ENCODE measurements at regions of chr19 and their contacts with region 1.

Region 1: GRCh38 chr19:40633207-40633606 is 32.0 kb downstream of the LTBP4 start:
- DNase-seq: no peak
- ATAC-seq: no peak
- H3K4me3 ChIP-seq: no peak overlapping the region
- H3K4me3 Mint-ChIP-seq: no peak overlapping the region
- H3K27ac ChIP-seq: no peak overlapping the region
- H3K27ac Mint-ChIP-seq: peak overlapping the region in 2 of 9 donors; percentile 11 to 78
- H3K4me1 ChIP-seq: peaks cover 4 to 5% of the 10 kb centered on the region in 2 donors
- H3K4me1 Mint-ChIP-seq: peaks cover 7 to 19% (median 16%) of the 10 kb centered on the region in 7 donors
- H3K27me3 ChIP-seq: no peaks in the 10 kb centered on the region
- H3K27me3 Mint-ChIP-seq: peaks cover 0 to 20% (median 0%) of the 10 kb centered on the region in 5 donors

Region 2: DNA sequence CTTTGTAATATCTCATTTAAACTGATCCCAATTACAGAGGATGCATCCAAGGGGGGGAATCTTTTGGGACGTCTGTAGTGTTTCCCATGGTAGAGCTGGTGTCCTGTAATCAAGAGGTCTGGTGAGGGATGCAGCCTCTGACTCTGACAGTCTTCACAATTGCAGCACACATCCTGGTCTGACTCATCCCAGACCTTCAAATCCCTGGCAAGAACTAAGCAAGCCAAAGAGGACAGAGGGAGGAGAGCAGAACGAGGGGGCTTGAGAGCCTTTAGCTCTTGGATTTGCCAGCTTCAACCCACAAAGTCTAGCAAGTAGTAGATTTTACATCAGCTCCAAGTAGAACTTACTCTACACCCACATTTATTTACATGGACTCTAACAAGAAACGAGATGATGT is 681.5 kb before region 1 on chr19:
- CTCF ChIA-PET with region 1: no interaction called
- POLR2A ChIA-PET with region 1: no interaction called
- intact Hi-C with region 1: no loop called
- DNase-seq: peak in 1 of 9 donors; percentile 13
- ATAC-seq: no peak
- H3K4me3 ChIP-seq: no peak overlapping the region
- H3K4me3 Mint-ChIP-seq: peak overlapping the region; percentile 69 to 96 (median 80)
- H3K27ac ChIP-seq: peak overlapping the region; percentile 82
- H3K27ac Mint-ChIP-seq: peak overlapping the region; percentile 84 to 99 (median 95)
- H3K4me1 ChIP-seq: peaks cover 58 to 78% of the 10 kb centered on the region in 2 donors
- H3K4me1 Mint-ChIP-seq: peaks cover 58 to 97% (median 78%) of the 10 kb centered on the region in 7 donors
- H3K27me3 ChIP-seq: no peaks in the 10 kb centered on the region
- H3K27me3 Mint-ChIP-seq: no peaks in the 10 kb centered on the region

Region 3: DNA sequence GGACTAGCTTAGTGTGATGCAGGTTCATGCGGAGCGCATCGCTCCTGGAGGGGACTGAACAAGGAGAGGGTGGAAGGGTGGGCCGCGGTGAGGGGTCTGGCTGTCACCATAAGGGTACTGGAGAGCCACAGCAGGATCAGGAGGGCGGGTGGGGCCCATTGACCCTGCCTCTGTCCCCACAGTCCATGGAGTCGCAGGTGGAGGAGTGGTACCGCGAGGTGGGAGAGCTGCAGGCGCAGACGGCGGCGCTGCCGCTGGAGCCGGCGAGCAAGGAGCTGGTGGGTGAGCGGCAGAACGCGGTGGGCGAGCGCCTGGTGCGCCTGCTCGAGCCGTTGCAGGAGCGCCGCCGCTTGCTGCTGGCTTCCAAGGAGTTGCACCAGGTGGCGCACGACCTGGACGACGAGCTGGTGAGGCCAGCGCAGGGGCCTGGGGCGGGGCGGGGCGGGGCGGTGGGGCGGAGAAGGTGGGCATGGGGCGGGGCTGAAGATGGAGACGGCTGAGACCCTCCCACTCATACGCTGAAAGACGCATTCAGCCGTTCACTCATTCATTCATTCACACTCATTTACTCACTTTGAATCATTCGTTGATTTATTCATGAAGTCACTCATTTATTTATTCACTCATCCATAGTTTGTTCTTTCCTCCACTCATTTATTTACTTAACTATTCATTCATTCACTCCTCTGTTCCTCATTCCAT is 84.0 kb before region 1 on chr19:
- CTCF ChIA-PET with region 1: interaction called, 5 read pairs
- POLR2A ChIA-PET with region 1: no interaction called
- intact Hi-C with region 1: loop called in 1 of 2 experiments (anchors 1 kb)
- DNase-seq: peak; percentile 26 to 74 (median 57)
- ATAC-seq: peak; percentile 95
- H3K4me3 ChIP-seq: no peak overlapping the region
- H3K4me3 Mint-ChIP-seq: peak overlapping the region in 8 of 10 donors; percentile 13 to 73 (median 54)
- H3K27ac ChIP-seq: no peak overlapping the region
- H3K27ac Mint-ChIP-seq: no peak overlapping the region
- H3K4me1 ChIP-seq: peaks cover 0 to 5% of the 10 kb centered on the region in 2 donors
- H3K4me1 Mint-ChIP-seq: peaks cover 0 to 14% (median 12%) of the 10 kb centered on the region in 7 donors
- H3K27me3 ChIP-seq: peaks cover 0 to 10% of the 10 kb centered on the region in 2 donors
- H3K27me3 Mint-ChIP-seq: peaks cover 38 to 60% (median 52%) of the 10 kb centered on the region in 5 donors